Mammary epithelial cell (primary cell): ENCODE measurements at regions of chr2 and their contacts with region 1.

Region 1: DNA sequence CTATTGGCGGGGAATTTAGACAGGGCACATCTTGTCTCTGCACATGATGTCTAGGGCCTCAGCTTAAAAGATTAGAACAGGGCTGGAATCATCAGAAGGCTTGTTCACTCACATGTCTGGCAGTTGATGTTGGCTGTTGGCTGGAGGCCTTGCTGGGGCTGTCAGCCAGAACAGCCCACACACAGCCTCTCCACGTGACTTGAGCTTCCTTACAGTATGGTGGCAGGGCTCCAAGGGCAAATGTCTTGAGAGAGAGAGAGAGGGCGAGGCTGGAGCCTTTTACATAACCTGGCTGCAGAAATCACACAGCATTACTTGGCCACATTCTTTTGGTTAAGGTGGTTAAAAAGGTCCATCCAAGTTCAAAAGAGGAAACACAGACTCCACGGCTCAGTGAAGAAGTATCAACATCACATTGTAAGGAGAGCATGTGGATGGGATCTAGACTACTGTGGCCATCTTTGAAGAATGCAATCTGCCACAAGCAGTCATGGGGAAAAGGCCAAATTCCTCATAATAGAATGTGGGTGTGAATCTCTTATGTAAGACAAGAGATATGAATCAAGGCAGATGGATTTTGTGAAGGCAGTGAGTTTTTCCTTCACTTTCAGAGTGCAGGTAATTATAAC is 30.4 kb downstream of the SRSF7 start:
- DNase-seq: peak; percentile 98
- H3K4me3 ChIP-seq: no peak overlapping the region
- H3K27ac ChIP-seq: peak overlapping the region; percentile 34
- H3K4me1 ChIP-seq: peaks cover 23% of the 10 kb centered on the region
- H3K27me3 ChIP-seq: no peaks in the 10 kb centered on the region
- CTCF ChIP-seq: no peak

Region 2: GRCh38 chr2:38586931-38587330 is 133.8 kb before region 1 on chr2:
- CTCF ChIA-PET with region 1: no interaction called
- dilution Hi-C with region 1: loop called (anchors 5 kb)
- in situ Hi-C with region 1: no loop called
- intact Hi-C with region 1: no loop called
- DNase-seq: no peak
- H3K4me3 ChIP-seq: no peak overlapping the region
- H3K27ac ChIP-seq: no peak overlapping the region
- H3K4me1 ChIP-seq: no peaks in the 10 kb centered on the region
- H3K27me3 ChIP-seq: no peaks in the 10 kb centered on the region
- CTCF ChIP-seq: no peak

Region 3: DNA sequence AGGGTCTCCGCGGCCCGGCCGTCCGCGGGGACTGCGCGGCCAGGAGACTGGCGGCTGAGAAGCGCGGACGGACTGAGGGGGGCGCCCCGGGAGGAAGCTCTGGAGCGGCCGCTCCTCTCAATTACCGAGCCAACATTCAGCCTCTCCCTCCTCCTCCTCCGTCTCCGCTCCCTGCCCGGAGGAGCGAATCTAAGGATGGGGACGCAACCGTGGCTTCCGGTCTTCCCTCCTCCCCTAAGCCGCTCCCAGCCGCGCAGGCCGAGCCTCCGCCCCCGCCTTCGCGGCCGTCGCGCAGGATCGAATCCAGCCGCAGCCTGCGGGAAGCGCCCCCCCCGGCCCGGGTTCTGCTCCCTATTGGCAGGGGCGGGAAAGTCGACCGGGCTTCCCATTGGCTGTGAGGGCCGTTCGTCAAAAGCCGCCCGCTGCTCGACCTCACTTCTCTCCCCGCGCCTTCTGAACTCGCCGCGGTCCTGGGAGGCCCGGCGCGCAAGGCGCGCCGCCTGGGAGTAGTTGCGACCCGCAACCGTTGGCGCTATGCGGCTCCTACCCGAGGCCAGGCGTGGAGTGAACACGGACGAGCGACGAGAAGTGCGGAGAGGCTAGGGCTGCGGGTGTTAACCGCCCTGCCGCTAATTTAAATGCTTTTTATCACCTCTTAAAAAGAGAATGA is 117.9 kb before region 1 on chr2 and contains the start of gene HNRNPLL:
- CTCF ChIA-PET with region 1: no interaction called
- dilution Hi-C with region 1: no loop called
- in situ Hi-C with region 1: loop called in 1 of 2 experiments (anchors 5 kb)
- intact Hi-C with region 1: no loop called
- DNase-seq: peak; percentile 99
- H3K4me3 ChIP-seq: peak within 1 kb of the TSS; percentile 71 to 93 (median 80)
- H3K27ac ChIP-seq: peak within 1 kb of the TSS; percentile 82
- H3K4me1 ChIP-seq: peaks cover 25% of the 10 kb centered on the region
- H3K27me3 ChIP-seq: no peaks in the 10 kb centered on the region
- CTCF ChIP-seq: no peak
- total RNA-seq, gene HNRNPLL: 36.0 to 46.0 TPM

Region 4: DNA sequence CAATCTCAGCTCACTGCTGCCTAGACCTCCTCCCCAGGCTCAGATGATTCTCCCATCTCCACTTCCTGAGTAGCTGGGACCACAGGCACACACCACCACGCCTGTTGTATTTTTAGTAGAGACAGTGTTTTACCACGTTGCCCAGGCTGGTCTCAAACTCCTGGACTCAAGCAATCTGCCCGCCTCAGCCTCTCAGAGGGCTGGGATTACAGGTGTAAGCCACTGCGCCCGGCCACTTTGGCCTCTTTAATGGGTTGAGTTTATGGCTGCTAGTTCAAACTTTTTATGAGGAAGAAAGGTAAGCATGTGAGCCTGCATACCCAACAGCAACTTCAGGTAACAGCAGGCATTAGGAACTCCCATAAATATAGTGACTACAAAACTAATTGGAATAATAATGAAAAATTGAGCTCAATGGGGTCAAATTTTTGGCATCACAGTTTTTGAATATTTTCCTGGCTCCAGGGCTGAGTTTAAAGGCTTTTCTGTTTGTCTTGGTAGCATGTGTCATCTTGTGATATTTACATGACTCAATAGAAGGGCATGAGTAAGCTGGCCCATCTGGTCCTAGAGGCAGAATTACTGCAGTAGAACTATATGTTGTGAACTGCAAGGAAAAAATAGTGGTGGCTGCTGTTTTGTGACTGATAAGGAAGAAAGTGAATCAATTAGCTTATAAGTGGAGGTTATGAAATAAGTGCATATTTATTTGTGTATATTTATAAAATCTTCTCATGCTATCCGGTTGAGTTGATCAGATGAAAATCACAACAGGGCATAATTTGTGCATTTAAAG is 30.0 kb before region 1 on chr2:
- CTCF ChIA-PET with region 1: no interaction called
- dilution Hi-C with region 1: no loop called
- in situ Hi-C with region 1: no loop called
- intact Hi-C with region 1: loop called (anchors 2 kb)
- DNase-seq: peak; percentile 86
- H3K4me3 ChIP-seq: no peak overlapping the region
- H3K27ac ChIP-seq: peak overlapping the region; percentile 50
- H3K4me1 ChIP-seq: peaks cover 36% of the 10 kb centered on the region
- H3K27me3 ChIP-seq: no peaks in the 10 kb centered on the region
- CTCF ChIP-seq: no peak

Region 5: DNA sequence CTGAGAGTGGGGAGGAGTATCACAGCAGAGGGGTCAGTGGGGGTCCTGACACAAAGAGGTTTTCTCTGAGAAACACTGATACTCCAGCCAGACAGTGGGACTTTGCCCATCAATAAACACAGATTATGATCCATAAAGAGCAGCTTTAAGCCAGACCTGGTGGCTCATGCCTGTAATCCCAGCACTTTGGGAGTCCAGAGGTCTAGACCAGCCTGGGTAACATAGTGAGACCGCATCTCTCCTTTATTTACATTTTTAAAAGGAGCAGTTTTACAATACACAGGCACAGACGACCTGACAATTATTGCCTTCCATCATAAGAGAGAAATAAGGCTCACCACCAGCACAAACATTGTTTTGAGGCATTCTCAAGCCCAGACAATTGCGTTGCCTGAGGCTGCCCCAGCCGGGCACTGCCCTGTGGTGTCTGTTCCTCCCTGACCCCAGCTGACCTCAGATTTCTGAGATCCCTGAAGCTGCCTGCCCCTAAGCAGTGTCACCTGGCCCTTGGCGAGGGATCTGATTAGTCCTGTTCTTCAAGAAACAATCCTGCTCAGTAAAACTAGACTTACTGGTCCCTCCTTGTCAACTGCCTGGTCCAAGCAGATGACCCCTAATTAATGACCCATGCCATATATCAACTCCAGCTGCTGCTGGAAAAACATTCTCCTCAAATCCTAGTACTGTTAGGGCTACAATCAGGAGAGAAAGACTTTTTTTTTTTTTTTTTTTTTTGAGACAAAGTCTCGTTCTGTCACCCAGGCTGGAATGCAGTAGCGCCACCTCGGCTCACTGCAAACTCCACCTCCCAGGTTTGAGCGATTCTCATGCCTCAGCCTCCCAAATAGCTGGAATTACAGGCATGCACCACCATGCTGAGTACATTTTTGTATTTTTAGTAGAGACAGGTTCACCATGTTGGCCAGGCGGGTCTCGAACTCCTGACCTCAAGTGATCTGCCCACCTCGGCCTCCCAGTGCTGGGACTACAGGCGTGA is 459.5 kb after region 1 on chr2:
- CTCF ChIA-PET with region 1: no interaction called
- dilution Hi-C with region 1: no loop called
- in situ Hi-C with region 1: no loop called
- intact Hi-C with region 1: no loop called
- DNase-seq: no peak
- H3K4me3 ChIP-seq: no peak overlapping the region
- H3K27ac ChIP-seq: no peak overlapping the region
- H3K4me1 ChIP-seq: no peaks in the 10 kb centered on the region
- H3K27me3 ChIP-seq: no peaks in the 10 kb centered on the region
- CTCF ChIP-seq: no peak